Right lobe of liver (tissue), 6 donors: ENCODE measurements at regions of chrX and their contacts with region 1.

Region 1: DNA sequence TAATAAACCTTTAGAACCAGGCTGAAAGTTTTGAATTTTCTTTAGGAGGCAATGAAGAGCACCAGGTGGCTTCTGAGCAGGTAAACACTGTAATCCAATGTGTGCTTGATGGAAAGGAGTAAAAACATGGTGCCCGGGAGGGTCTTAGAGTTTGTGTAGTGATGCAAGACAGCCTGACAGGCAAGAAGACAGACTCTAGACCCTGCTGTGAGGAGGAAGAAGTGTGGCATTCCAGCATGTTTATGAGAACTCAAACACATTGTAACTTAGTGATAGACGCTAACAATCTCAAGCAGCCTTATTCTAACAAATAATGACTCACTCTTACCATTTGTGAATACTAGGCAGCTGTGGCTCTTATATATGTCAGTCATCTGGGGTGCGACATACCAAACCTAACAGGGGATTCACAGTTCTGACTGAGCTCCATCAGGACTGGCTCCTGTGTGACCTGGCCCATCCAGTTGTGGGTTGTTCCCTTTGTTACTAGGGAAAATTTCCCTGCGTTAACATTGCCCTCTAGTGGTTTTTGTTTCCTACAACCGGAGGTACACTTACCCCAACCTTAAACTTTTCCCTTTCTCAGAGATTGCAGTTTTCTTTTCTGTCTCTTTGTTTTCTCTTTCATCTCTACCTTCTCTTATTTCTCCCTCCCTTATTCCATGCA is 53.8 kb downstream of the VSIG4 start:
- DNase-seq: peak in 1 of 3 donors; percentile 18
- ATAC-seq: peak; percentile 78 to 97 (median 94)
- H3K4me3 ChIP-seq: no peak overlapping the region
- H3K27ac ChIP-seq: no peak overlapping the region
- H3K4me1 ChIP-seq: no peaks in the 10 kb centered on the region
- H3K27me3 ChIP-seq: no peaks in the 10 kb centered on the region
- CTCF ChIP-seq: peak; percentile 58 to 74 (median 70)
- POLR2A ChIP-seq: no peak

Region 2: GRCh38 chrX:65581661-65582339 is 404.3 kb before region 1 on chrX:
- intact Hi-C with region 1: loop called (anchors 10 kb)
- DNase-seq: peak in 2 of 3 donors; percentile 27 to 50
- ATAC-seq: peak; percentile 87 to 99 (median 95)
- H3K4me3 ChIP-seq: no peak overlapping the region
- H3K27ac ChIP-seq: no peak overlapping the region
- H3K4me1 ChIP-seq: no peaks in the 10 kb centered on the region
- H3K27me3 ChIP-seq: peaks cover 0 to 3% of the 10 kb centered on the region in 2 donors
- CTCF ChIP-seq: peak; percentile 75 to 85 (median 84)
- POLR2A ChIP-seq: no peak

Region 3: GRCh38 chrX:65925005-65925991 is 60.8 kb before region 1 on chrX:
- intact Hi-C with region 1: no loop called
- DNase-seq: no peak
- ATAC-seq: no peak
- H3K4me3 ChIP-seq: no peak overlapping the region
- H3K27ac ChIP-seq: no peak overlapping the region
- H3K4me1 ChIP-seq: no peaks in the 10 kb centered on the region
- H3K27me3 ChIP-seq: peaks cover 0 to 6% of the 10 kb centered on the region in 2 donors
- CTCF ChIP-seq: no peak
- POLR2A ChIP-seq: no peak